Adrenal gland (tissue), 19 donors: ENCODE measurements at regions of chr10 and their contacts with region 1.

Region 1: GRCh38 chr10:112991888-112992581 is 42.0 kb downstream of the TCF7L2 start:
- DNase-seq: no peak
- H3K4me3 ChIP-seq: no peak overlapping the region
- H3K27ac ChIP-seq: no peak overlapping the region
- H3K4me1 ChIP-seq: peaks cover 2 to 18% of the 10 kb centered on the region in 2 donors
- H3K27me3 ChIP-seq: no peaks in the 10 kb centered on the region
- CTCF ChIP-seq: no peak
- POLR2A ChIP-seq: no peak

Region 2: DNA sequence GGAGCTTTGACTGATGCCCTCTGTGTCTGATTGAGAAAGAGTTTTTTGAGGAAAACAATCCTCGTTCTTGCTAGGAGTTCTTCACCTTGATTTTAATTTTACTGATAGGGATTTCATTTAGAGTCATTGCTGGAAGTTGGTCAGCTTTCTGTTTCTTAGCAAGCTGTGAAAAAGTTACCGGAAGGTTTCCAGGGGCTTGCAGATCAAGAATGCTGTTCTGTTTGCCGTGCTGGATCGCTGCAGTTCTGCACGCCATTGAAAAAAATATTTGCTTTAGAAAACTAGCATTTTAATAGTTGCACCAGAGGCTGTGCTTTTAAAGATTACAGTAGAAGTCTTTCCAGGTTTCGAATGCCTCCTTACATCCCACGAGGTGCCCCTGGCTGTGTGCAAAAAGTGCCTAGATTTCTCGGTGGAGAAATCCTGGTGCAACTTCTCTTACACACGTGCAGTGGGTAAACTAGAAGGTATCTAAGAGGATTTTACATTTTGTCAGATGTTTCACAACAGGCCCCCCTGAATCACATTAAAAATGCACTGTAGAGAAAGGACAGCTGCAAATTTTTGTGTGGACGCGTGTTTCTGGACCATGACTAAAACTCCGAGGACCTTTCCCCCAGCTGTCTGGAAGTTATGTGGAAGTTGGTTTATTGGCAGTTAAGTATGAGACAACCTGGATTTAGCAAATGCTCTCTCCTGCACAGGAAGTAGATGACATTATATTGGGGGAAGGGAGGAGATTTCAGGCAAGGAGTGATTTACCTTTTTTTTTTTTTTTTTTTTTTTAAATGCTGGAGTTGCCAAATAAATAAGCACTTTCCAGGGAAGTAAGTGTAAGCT is 36.2 kb before region 1 on chr10:
- intact Hi-C with region 1: loop called in 1 of 2 experiments (anchors 2 kb)
- DNase-seq: no peak
- H3K4me3 ChIP-seq: peak overlapping the region in 1 of 4 donors; percentile 49
- H3K27ac ChIP-seq: peak overlapping the region in 3 of 5 donors; percentile 11 to 59 (median 18)
- H3K4me1 ChIP-seq: peaks cover 25 to 37% of the 10 kb centered on the region in 2 donors
- H3K27me3 ChIP-seq: no peaks in the 10 kb centered on the region
- CTCF ChIP-seq: no peak
- POLR2A ChIP-seq: no peak